ENCODE measurements at regions of chr6 and their contacts with region 1.

Region 1: DNA sequence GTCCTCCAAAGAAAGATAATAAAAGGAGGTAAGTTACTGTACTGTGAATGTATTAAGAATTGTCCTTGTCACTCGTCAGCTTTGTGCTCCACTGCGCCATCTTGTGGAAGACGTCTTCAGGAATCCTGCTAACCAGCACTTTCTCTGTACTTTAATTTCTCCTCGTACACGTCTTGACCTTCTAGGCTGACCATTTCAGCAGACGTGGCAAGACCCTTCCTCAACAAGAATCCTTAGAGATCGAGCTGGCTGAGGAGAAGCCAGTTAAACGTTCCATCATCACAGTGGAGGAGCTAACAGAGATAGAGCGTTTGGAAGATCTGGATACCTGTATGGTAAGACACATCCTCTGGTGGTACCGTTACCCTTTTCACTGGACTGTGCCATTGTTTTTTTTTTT is 95.5 kb upstream of the SCGN start:
- DNase-seq: peak; percentile 28
- ATAC-seq: peak; percentile 90
- H3K4me3 ChIP-seq: no peak overlapping the region
- H3K27ac ChIP-seq: no peak overlapping the region
- H3K4me1 ChIP-seq: no peaks in the 10 kb centered on the region
- H3K27me3 ChIP-seq: no peaks in the 10 kb centered on the region
- CTCF ChIP-seq: peak; percentile 80 to 83 (median 81)
- EP300 ChIP-seq: no peak
- POLR2A ChIP-seq: no peak
- RAD21 ChIP-seq: peak; percentile 60

Region 2: GRCh38 chr6:25223490-25223991 is 333.0 kb before region 1 on chr6:
- CTCF ChIA-PET with region 1: interaction called, 42 read pairs
- POLR2A ChIA-PET with region 1: no interaction called
- RAD21 ChIA-PET with region 1: interaction called, 18 read pairs
- SMC1A ChIA-PET with region 1: interaction called, 32 read pairs
- in situ Hi-C with region 1: no loop called
- intact Hi-C with region 1: loop called (anchors 1 kb)
- DNase-seq: peak; percentile 19
- ATAC-seq: peak; percentile 81
- H3K4me3 ChIP-seq: no peak overlapping the region; the same call in 1 of the 2 replicates
- H3K27ac ChIP-seq: no peak overlapping the region
- H3K4me1 ChIP-seq: no peaks in the 10 kb centered on the region
- H3K27me3 ChIP-seq: no peaks in the 10 kb centered on the region; a peak in 1 of 4 replicates
- CTCF ChIP-seq: peak; percentile 82 to 90 (median 84)
- EP300 ChIP-seq: 0 out of 4 replicates have a peak, but pooled peaks of 1 of the 2 experiments have one; percentile 11
- POLR2A ChIP-seq: no peak
- RAD21 ChIP-seq: peak; percentile 91

Region 3: DNA sequence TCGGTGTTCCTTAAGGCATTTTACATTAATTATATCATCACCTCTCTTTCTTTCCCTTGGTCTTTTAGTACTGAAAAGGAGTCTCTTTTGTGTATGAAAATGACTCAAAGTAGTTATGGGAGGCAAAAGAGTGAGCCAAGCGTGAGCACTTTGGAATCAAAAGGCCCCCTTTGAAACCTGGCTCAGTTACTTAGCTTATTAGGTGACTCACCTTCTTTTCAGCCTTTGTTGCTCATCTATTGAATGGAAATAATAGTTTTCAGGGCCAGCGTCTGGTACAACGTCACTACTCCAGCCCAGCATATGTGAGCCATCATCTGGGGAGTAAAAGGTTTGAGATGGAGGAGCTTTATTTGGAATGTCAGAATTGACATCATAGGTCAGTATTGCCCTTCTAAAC is 51.9 kb before region 1 on chr6:
- CTCF ChIA-PET with region 1: interaction called, 11 read pairs
- POLR2A ChIA-PET with region 1: no interaction called
- RAD21 ChIA-PET with region 1: no interaction called
- SMC1A ChIA-PET with region 1: interaction called, 3 read pairs
- in situ Hi-C with region 1: no loop called
- intact Hi-C with region 1: no loop called
- DNase-seq: no peak
- ATAC-seq: no peak
- H3K4me3 ChIP-seq: no peak overlapping the region
- H3K27ac ChIP-seq: no peak overlapping the region
- H3K4me1 ChIP-seq: no peaks in the 10 kb centered on the region
- H3K27me3 ChIP-seq: no peaks in the 10 kb centered on the region
- CTCF ChIP-seq: no peak
- EP300 ChIP-seq: no peak
- POLR2A ChIP-seq: no peak
- RAD21 ChIP-seq: no peak

Region 4: DNA sequence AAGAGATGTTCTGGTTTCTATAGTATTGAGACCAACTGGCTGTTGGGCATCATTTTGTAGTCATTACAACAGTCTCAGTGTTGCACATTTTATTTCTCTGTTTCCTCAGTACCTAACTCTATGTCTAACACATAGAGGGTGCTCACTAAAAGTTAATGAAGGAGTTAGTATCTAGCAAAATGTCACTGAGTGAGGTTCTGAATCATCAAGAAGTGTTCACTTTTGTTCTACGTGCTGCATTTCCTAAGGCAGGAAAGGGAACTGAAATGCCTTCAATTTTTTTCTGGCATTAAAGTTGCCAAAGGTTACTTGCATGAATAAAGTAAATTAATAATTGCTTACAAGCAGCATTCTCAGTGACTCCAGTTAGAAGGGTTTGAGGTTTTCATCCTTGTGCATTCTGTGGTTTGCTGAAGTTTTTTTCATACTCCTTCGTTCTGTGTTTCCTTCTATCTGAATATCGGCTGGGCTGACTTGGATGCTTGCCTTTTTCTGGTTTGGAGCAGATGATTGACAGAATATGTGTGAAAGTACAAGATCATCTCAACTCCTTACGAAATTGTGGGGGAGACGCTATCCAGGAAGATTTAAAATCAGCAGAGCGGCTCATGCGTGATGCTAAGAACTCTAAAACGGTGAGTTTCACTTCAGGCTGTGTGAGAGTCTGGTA is 19.0 kb before region 1 on chr6:
- CTCF ChIA-PET with region 1: interaction called, 31 read pairs
- POLR2A ChIA-PET with region 1: no interaction called
- RAD21 ChIA-PET with region 1: no interaction called
- SMC1A ChIA-PET with region 1: interaction called, 12 read pairs
- in situ Hi-C with region 1: no loop called
- intact Hi-C with region 1: no loop called
- DNase-seq: no peak
- ATAC-seq: no peak
- H3K4me3 ChIP-seq: no peak overlapping the region
- H3K27ac ChIP-seq: no peak overlapping the region
- H3K4me1 ChIP-seq: no peaks in the 10 kb centered on the region
- H3K27me3 ChIP-seq: no peaks in the 10 kb centered on the region
- CTCF ChIP-seq: no peak
- EP300 ChIP-seq: no peak
- POLR2A ChIP-seq: no peak
- RAD21 ChIP-seq: no peak

Region 5: DNA sequence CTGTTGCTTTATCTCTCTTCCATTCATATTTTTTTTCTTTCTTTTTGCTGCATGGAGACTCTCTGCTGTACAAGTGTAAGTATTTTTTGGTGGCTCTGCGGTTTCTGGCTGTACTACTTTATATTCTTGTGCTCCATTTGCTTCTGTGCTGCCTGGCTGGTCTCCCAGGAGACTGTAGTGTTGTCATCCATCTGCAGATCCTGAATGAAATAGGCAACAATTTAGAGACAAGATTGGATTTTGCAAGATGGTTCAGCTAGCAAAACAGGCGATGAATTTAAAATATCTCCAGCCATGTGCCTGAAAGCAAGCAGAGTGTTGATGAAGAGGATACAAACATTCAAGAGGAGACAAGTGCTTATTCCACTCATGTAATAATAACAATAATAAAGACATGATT is 20.4 kb after region 1 on chr6:
- CTCF ChIA-PET with region 1: interaction called, 17 read pairs
- POLR2A ChIA-PET with region 1: no interaction called
- RAD21 ChIA-PET with region 1: no interaction called
- SMC1A ChIA-PET with region 1: interaction called, 3 read pairs
- in situ Hi-C with region 1: no loop called
- intact Hi-C with region 1: no loop called
- DNase-seq: no peak
- ATAC-seq: no peak
- H3K4me3 ChIP-seq: no peak overlapping the region
- H3K27ac ChIP-seq: no peak overlapping the region
- H3K4me1 ChIP-seq: peaks cover 5% of the 10 kb centered on the region
- H3K27me3 ChIP-seq: no peaks in the 10 kb centered on the region
- CTCF ChIP-seq: no peak
- EP300 ChIP-seq: no peak
- POLR2A ChIP-seq: no peak
- RAD21 ChIP-seq: no peak

Region 6: DNA sequence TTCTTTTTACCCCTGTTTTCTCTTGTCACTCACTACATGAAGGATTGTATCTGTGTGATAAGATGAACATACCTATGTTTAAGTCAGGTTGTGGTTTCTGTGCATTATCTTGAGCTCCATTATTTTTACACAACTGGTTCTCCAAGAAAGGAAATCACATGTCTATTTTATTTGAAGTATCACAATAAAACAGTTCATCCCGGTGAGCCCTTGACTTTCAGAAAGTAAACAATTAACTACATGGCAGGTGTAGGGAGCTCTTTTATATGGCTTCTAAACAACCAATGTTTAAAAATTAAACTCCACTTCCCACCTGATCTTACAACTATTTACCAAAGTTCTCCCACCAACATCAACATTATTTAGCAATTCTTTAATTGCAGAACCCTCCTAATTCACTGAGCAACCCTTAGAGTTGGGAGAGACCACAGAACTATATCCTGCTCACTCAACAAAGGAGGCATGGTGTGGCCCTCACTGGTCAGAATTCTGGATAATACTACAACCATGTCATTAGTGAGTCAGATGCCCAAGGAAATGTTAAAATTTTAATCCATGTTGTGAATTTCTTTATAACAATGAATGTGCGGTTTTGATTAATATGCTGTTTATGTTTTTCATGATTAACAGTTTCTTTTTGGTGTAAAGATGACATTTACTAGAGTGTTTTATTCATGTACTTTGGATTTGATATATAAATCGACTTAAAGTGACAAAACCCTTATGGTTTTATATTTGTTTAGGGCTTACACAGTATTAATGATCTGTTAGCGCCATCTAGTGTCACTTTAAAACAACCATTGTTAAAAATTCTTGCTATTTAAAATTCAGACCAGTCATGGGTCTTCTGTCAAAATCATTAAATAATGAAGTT is 45.5 kb after region 1 on chr6:
- CTCF ChIA-PET with region 1: interaction called, 16 read pairs
- POLR2A ChIA-PET with region 1: no interaction called
- RAD21 ChIA-PET with region 1: no interaction called
- SMC1A ChIA-PET with region 1: interaction called, 8 read pairs
- in situ Hi-C with region 1: no loop called
- intact Hi-C with region 1: loop called (anchors 5 kb)
- DNase-seq: no peak
- ATAC-seq: 0 out of 3 replicates have a peak, but pooled peaks have one; percentile 39
- H3K4me3 ChIP-seq: no peak overlapping the region
- H3K27ac ChIP-seq: no peak overlapping the region
- H3K4me1 ChIP-seq: no peaks in the 10 kb centered on the region
- H3K27me3 ChIP-seq: no peaks in the 10 kb centered on the region
- CTCF ChIP-seq: peak; percentile 24 to 69 (median 45); a peak in 5 of 6 replicates
- EP300 ChIP-seq: no peak
- POLR2A ChIP-seq: no peak
- RAD21 ChIP-seq: peak; percentile 72

Region 7: GRCh38 chr6:25682324-25682723 is 125.8 kb after region 1 on chr6:
- CTCF ChIA-PET with region 1: no interaction called
- POLR2A ChIA-PET with region 1: no interaction called
- RAD21 ChIA-PET with region 1: no interaction called
- SMC1A ChIA-PET with region 1: no interaction called
- in situ Hi-C with region 1: no loop called
- intact Hi-C with region 1: no loop called
- DNase-seq: no peak
- ATAC-seq: no peak
- H3K4me3 ChIP-seq: no peak overlapping the region
- H3K27ac ChIP-seq: no peak overlapping the region
- H3K4me1 ChIP-seq: no peaks in the 10 kb centered on the region
- H3K27me3 ChIP-seq: no peaks in the 10 kb centered on the region; a peak in 1 of 4 replicates
- CTCF ChIP-seq: no peak
- EP300 ChIP-seq: no peak
- POLR2A ChIP-seq: no peak
- RAD21 ChIP-seq: no peak

Measured in GM12878 (cell line).